A673 (cell line): ENCODE measurements at regions of chr14 and their contacts with region 1.

Region 1: GRCh38 chr14:67934008-67934481 is 114.5 kb downstream of the RAD51B start:
- DNase-seq: peak; percentile 94
- H3K4me3 ChIP-seq: no peak overlapping the region
- H3K27ac ChIP-seq: no peak overlapping the region
- H3K4me1 ChIP-seq: peaks cover 23% of the 10 kb centered on the region
- H3K27me3 ChIP-seq: peaks cover 12% of the 10 kb centered on the region
- CTCF ChIP-seq: peak; percentile 85

Region 2: GRCh38 chr14:67816326-67817002 is 117.6 kb before region 1 on chr14 and contains the start of gene ZFYVE26:
- CTCF ChIA-PET with region 1: no interaction called
- POLR2A ChIA-PET with region 1: no interaction called
- intact Hi-C with region 1: no loop called
- DNase-seq: peak; percentile 98
- H3K4me3 ChIP-seq: peak within 1 kb of the TSS; percentile 63
- H3K27ac ChIP-seq: peak within 1 kb of the TSS; percentile 51
- H3K4me1 ChIP-seq: peaks cover 16% of the 10 kb centered on the region
- H3K27me3 ChIP-seq: no peaks in the 10 kb centered on the region
- CTCF ChIP-seq: no peak
- total RNA-seq, gene ZFYVE26: 20.5 and 21.9 TPM in 2 replicates

Region 3: DNA sequence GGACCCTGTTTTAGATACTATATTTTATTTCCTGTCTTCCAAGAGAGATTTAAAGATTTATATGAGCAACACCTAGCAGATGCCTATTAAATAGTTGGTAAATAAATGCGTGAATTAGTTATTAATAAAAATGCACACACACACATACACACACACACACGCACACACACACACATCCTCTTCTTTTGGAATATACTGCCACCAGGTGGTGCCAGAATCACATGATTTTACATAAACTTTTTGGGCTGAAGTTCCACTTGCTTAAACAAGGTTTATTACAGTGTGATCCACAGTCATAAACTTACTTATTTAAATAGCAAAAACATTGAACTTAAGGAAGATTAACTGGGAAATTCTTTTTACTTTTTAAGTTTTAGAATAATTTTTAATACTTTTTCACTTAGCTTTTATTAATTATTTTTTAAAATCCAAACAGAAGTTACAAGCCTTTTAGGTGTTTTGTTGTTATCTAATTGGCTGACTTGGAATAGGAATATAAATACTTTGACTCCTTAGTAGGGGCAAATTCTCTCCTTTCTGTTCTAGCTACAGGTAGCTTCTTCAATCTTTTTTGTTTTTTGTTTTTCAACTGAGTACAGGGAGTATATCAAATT is 96.9 kb before region 1 on chr14:
- CTCF ChIA-PET with region 1: no interaction called
- POLR2A ChIA-PET with region 1: no interaction called
- intact Hi-C with region 1: loop called (anchors 2 kb)
- DNase-seq: peak; percentile 78
- H3K4me3 ChIP-seq: no peak overlapping the region
- H3K27ac ChIP-seq: no peak overlapping the region
- H3K4me1 ChIP-seq: no peaks in the 10 kb centered on the region
- H3K27me3 ChIP-seq: no peaks in the 10 kb centered on the region
- CTCF ChIP-seq: peak; percentile 71